Kidney (tissue), 22 donors: ENCODE measurements at regions of chr10 and their contacts with region 1.

Region 1: DNA sequence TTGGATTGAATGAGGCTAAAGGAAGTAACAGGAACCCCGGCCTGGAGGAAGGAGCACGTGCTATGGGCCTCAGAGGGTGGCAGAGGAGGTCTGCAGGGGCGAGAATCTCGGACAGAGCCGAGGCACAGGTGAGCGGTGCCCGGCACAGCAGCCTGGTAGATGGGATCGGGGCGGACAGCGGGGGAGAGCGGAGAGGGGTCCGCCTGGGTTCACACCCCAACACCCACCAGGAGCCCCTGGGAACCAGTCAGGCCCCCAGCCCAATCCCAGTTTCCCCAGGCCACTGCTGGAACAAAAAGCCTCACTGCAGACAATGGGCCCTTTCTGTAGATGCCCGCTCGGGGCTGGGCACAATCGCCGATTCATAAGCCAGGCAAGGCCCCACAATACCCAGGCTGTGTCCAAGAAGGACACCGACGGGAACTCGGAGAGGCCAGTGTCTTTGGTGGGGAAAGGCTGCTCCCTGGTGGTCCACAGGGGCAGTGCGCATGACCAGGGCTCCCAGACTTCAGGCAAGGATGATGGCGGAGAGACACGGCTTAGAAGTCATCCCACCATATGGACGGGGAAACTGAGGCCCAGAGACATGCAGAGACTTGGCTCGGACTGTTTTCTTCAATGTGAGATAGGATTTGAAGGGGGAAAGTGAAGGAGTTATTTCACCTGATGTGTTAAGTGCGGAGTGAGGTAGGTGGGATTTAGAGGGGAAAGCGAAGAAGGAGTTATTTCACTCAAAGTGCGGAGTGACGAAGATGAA is 106.9 kb upstream of the GPR26 start:
- DNase-seq: peak; percentile 73 to 88 (median 81)
- H3K4me3 ChIP-seq: no peak overlapping the region
- H3K27ac ChIP-seq: no peak overlapping the region
- H3K4me1 ChIP-seq: no peaks in the 10 kb centered on the region
- H3K27me3 ChIP-seq: no peaks in the 10 kb centered on the region
- CTCF ChIP-seq: peak; percentile 93

Region 2: GRCh38 chr10:123132576-123133477 is 426.4 kb before region 1 on chr10:
- intact Hi-C with region 1: loop called (anchors 5 kb)
- DNase-seq: peak; percentile 91 to 94 (median 91)
- H3K4me3 ChIP-seq: peak overlapping the region in 1 of 3 donors; percentile 40
- H3K27ac ChIP-seq: no peak overlapping the region
- H3K4me1 ChIP-seq: peaks cover 0 to 28% (median 0%) of the 10 kb centered on the region in 3 donors
- H3K27me3 ChIP-seq: peaks cover 66% of the 10 kb centered on the region
- CTCF ChIP-seq: peak; percentile 92

Region 3: GRCh38 chr10:123614888-123615287 is 55.6 kb after region 1 on chr10:
- intact Hi-C with region 1: no loop called
- DNase-seq: peak; percentile 76 to 93 (median 92)
- H3K4me3 ChIP-seq: no peak overlapping the region
- H3K27ac ChIP-seq: no peak overlapping the region
- H3K4me1 ChIP-seq: no peaks in the 10 kb centered on the region
- H3K27me3 ChIP-seq: no peaks in the 10 kb centered on the region
- CTCF ChIP-seq: no peak

Region 4: GRCh38 chr10:123633106-123633505 is 73.9 kb after region 1 on chr10:
- intact Hi-C with region 1: no loop called
- DNase-seq: no peak
- H3K4me3 ChIP-seq: no peak overlapping the region
- H3K27ac ChIP-seq: no peak overlapping the region
- H3K4me1 ChIP-seq: no peaks in the 10 kb centered on the region
- H3K27me3 ChIP-seq: no peaks in the 10 kb centered on the region
- CTCF ChIP-seq: no peak